ENCODE measurements at regions of chr9 and their contacts with region 1.

Region 1: GRCh38 chr9:36008774-36009300 is 27.9 kb upstream of the RECK start:
- DNase-seq: peak in 2 of 3 donors; percentile 63 to 77
- ATAC-seq: peak; percentile 83
- H3K4me3 ChIP-seq: no peak overlapping the region
- H3K4me1 ChIP-seq: peaks cover 11% of the 10 kb centered on the region
- CTCF ChIP-seq: peak; percentile 97

Region 2: DNA sequence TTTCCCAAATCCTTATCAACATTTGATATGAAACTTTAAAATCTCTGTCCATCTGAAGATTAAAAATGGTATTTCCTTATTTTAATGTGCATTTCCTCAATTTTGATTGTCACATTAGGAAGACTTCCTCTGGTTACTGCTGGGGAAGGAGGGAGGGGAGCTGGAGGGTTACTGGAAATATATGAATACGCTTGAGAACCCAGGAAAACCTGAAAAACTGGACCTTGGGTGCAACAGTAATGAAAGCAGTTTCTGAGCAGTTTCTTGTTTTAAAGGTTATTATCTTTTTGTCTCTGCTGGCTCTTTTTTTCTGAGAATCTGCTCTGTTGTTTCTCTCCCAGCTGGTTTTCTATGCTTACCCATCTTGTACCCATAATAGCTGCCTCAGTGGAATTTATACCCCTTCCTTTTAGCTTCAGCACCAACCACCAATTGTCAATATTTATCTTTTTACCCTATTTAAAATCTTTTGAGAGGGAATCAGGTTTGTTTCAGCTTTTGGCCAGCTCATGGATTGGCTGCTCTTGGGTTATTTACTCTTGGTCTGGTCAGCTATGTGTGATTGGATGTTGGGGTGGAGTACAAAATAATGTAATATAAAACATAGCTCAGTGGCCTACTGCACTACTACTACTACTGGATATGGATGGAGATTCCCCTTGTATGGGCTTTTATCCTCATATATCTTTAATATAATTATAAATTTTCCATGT is 779.6 kb before region 1 on chr9:
- intact Hi-C with region 1: no loop called
- DNase-seq: no peak
- ATAC-seq: peak; percentile 34
- H3K4me3 ChIP-seq: no peak overlapping the region
- H3K4me1 ChIP-seq: no peaks in the 10 kb centered on the region
- CTCF ChIP-seq: no peak

Region 3: DNA sequence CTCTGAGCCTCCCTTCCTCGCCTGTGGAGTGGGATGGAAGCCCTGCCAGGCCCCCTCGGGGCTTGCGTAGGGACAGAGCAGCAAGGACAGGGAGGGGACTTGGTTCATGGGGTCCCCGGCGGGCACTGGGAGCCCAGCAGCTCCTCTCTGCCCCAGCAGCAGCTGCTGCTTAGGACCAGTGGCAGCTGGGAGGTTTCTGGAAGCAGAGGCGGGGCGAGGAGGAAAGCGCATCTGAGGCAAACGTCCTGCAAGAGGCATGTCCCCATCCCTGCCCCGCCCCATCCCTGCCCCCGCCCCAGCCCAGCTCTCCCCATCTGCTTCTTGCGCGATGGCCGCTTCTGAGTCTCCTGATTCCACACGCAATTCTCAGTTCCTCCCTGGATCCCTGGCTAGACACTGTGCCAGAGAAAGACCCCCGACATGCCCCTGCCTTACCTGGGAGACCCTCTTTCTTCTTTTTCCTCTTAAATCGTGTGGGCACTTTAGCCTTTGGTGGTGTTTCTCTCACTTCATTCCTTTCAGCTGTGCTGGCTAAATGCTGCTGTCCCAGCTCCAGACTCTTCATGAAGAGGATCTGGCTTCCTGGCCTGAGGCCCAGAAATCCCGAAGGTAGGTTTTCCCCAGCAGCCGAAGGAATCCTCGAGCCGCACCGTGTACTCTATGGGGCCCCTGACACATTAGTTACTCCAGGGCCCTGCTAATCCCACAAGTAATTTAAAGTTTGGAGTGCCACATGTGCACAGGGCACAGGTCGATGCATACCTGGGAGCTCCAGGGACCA is 46.5 kb before region 1 on chr9:
- intact Hi-C with region 1: loop called (anchors 5 to 10 kb)
- DNase-seq: peak in 1 of 3 donors; percentile 66
- ATAC-seq: no peak
- H3K4me3 ChIP-seq: no peak overlapping the region
- H3K4me1 ChIP-seq: peaks cover 30% of the 10 kb centered on the region
- CTCF ChIP-seq: no peak

Region 4: DNA sequence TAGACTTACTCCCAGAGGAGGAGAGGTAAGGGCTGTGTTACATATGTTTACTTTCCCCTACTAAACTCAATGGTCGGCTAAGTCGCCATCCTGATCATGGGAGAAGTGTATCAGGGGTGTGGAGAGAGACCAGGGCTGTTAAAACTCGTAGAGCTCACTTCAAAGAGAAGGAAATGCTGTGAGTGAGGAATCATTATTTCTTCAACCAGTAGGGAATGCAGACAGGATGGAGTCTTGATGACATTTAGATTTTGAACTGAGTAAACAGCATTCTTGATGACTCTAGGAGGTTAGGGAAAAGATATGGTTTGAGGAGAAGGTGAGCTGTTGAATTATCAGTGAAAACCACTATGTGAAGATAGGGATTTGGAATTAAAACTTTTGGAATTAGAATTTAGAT is 45.1 kb after region 1 on chr9:
- intact Hi-C with region 1: no loop called
- DNase-seq: no peak
- ATAC-seq: no peak
- H3K4me3 ChIP-seq: no peak overlapping the region
- H3K4me1 ChIP-seq: no peaks in the 10 kb centered on the region
- CTCF ChIP-seq: no peak

Region 5: DNA sequence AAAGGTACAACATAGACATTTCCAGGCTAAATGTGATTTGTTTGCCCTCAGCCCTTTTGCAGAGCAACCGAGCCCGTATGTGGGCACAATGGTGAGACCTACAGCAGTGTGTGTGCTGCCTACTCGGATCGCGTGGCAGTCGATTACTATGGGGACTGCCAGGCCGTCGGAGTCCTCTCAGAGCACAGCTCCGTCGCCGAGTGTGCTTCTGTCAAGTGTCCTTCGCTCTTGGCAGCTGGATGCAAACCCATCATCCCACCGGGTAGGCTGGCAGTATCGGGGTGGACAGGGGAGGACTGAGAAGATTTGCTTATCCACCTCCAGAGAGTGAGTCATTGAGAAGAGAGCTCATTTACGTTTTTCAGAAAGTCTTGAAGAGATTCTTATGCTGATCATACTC is 109.9 kb after region 1 on chr9:
- intact Hi-C with region 1: no loop called
- DNase-seq: no peak
- ATAC-seq: no peak
- H3K4me3 ChIP-seq: no peak overlapping the region
- H3K4me1 ChIP-seq: no peaks in the 10 kb centered on the region
- CTCF ChIP-seq: no peak

Measured in mucosa of descending colon (tissue), 3 donors.